AG04449 (cell line): ENCODE measurements at regions of chr14 and their contacts with region 1.

Region 1: GRCh38 chr14:101767618-101768362 is 6.3 kb downstream of the PPP2R5C start:
- DNase-seq: no peak
- H3K4me3 ChIP-seq: no peak overlapping the region
- CTCF ChIP-seq: no peak

Region 2: GRCh38 chr14:101559624-101560533 is 207.9 kb before region 1 on chr14:
- CTCF ChIA-PET with region 1: no interaction called
- POLR2A ChIA-PET with region 1: no interaction called
- DNase-seq: no peak
- H3K4me3 ChIP-seq: no peak overlapping the region
- CTCF ChIP-seq: no peak

Region 3: DNA sequence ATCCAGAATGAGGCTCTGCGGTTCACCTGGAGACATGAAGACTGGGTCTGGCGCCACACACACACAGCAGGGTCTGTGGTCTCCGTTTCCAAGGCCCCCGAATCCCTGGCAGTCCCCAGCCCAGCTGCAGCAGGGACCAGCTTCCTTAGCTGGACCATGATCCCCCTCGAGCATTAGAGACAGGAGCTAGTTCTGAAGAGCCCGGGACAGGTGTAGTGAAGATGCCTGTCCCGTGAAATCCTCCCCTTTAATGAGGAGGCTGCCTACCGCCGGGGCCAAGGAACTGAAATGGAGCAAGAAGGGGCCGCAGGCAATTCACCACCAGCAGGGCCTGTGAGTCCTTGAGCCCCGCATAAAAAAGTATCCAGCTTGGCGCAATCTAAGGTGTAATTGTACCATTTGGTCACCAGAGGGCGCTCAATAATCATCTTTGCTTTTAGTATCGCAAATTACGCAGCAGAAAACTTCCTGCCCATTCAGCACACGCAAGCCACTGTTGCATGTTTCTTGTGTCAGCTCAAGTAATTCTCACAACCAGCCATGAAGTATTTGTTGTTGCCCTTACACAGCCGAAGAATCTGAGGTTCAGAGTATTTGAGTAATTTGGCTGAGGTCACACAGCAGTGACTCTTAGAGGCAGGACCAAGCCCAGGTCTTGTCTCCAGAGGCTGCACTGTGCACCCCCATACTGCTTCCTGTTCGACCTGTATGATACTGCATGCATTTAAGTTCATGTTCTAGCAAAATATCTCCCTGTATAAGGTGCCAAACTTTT is 60.5 kb before region 1 on chr14:
- CTCF ChIA-PET with region 1: interaction called, 21 read pairs
- POLR2A ChIA-PET with region 1: no interaction called
- DNase-seq: peak; percentile 36
- H3K4me3 ChIP-seq: no peak overlapping the region; the same call in 1 of the 2 replicates
- CTCF ChIP-seq: peak; percentile 61

Region 4: DNA sequence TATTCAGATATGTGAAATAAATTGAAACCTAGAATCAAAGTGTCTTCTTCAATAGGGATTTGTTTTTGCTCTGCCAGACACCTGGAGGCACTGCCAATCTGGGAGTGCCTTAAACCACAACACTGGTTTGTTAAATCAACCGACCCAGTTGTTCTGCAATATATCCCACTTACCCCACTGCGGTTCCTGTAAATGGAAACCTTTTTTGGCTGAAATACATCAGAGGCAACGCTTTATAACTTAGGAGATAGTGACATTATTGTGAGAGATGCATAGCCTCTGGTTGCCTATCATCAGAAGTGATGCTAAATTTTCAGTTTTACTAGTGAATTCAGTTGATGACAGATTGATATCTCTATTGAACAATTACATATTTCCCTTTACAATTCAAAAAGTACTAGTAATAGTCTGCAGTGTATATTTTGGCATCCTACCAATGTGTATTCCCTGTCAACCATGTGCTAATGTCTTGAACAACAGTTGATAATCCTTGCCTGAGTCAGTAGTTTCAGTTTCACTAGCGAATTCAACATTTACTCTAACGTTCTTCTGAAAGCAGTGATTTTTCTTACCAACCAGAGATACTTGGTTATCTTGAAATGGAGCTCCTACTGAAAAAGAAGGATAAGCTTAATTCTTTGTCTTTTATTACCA is 24.3 kb after region 1 on chr14:
- CTCF ChIA-PET with region 1: interaction called, 17 read pairs
- POLR2A ChIA-PET with region 1: no interaction called
- DNase-seq: peak; percentile 12
- H3K4me3 ChIP-seq: peak overlapping the region; percentile 36
- CTCF ChIP-seq: no peak

Region 5: GRCh38 chr14:101903111-101903561 is 135.3 kb after region 1 on chr14:
- CTCF ChIA-PET with region 1: interaction called, 13 read pairs
- POLR2A ChIA-PET with region 1: no interaction called
- DNase-seq: no peak
- H3K4me3 ChIP-seq: no peak overlapping the region
- CTCF ChIP-seq: no peak

Region 6: GRCh38 chr14:101947906-101948665 is 180.3 kb after region 1 on chr14:
- CTCF ChIA-PET with region 1: interaction called, 60 read pairs
- POLR2A ChIA-PET with region 1: no interaction called
- DNase-seq: peak; percentile 98
- H3K4me3 ChIP-seq: peak overlapping the region; percentile 98
- CTCF ChIP-seq: no peak

Region 7: GRCh38 chr14:101997429-101998336 is 229.9 kb after region 1 on chr14:
- CTCF ChIA-PET with region 1: no interaction called
- POLR2A ChIA-PET with region 1: no interaction called
- DNase-seq: no peak
- H3K4me3 ChIP-seq: no peak overlapping the region
- CTCF ChIP-seq: no peak

Region 8: GRCh38 chr14:102096214-102097114 is 328.7 kb after region 1 on chr14:
- CTCF ChIA-PET with region 1: interaction called, 18 read pairs
- POLR2A ChIA-PET with region 1: no interaction called
- DNase-seq: no peak
- H3K4me3 ChIP-seq: no peak overlapping the region; the same call in 1 of the 2 replicates
- CTCF ChIP-seq: peak; percentile 76